RWPE1 (cell line): ENCODE measurements at regions of chr9 and their contacts with region 1.

Region 1: DNA sequence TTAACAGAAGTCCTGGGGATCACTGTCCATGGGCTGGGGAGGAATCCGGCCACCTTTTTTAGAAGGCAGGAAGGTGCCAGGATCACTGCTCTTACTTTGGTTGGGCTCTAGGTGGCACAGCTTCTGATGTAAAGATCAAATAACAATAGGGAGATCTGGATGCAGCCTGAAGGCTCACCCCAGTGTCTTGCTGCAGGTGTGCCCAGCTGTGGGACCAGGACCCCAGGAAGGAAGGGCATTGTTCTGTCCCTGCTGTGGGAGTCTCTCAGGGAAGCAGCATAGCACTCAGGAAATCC is 69.6 kb downstream of the DAB2IP start:
- DNase-seq: no peak
- H3K27ac ChIP-seq: peak overlapping the region; percentile 90
- CTCF ChIP-seq: no peak; the same call in 1 of the 2 replicates

Region 2: GRCh38 chr9:121581786-121582600 is 139.0 kb before region 1 on chr9:
- CTCF ChIA-PET with region 1: no interaction called
- POLR2A ChIA-PET with region 1: no interaction called
- DNase-seq: no peak
- H3K27ac ChIP-seq: no peak overlapping the region
- CTCF ChIP-seq: no peak

Region 3: DNA sequence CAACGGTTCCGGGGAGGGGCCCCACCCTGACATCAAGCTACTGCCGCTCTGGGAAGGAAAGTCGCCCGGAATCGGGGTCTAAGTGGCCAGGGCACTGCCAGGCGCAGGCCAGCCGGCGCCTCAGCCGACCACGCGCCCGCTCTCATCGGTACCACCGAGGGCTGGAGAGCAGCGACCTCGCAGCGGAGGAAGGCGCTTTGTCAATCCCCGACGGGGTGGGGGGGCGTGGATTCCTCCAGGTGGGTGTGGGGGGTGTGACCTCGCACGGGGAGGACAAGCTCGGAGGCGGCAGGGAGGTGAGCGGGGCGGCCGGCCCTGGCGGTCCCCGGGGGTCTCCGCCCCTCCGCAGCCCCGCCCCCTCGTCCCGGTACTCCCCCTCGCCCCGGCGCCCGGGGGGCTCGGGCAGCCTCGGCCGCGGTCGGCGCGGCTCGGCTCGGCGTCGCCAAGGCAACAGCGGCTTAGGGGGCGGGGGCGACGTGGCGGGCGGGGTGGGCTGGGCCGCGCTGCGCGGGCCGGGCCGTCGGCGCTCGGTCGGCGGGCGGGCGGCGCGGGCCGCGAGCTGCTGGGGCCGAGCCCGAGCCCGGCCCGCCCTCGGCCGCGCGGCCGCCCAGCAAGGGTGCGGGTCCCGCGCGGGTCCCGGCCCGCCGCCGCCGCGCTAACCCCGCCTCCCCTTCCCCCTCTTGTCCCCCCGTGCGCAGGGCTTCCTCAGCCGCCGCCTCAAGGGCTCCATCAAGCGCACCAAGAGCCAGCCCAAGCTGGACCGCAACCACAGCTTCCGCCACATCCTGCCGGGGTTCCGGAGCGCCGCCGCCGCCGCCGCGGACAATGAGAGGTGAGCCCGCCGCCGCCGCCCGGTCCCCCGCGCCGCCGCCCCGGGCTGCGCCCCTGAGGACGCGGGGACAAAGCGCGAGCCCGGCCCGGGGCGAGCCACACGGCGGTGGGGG is 22.1 kb before region 1 on chr9:
- CTCF ChIA-PET with region 1: interaction called, 23 read pairs
- POLR2A ChIA-PET with region 1: interaction called, 10 read pairs
- DNase-seq: peak; percentile 69
- H3K27ac ChIP-seq: peak overlapping the region; percentile 98
- CTCF ChIP-seq: no peak